H1 (cell line): ENCODE measurements at regions of chr2 and their contacts with region 1.

Region 1: GRCh38 chr2:74690571-74690970 is 36.5 kb downstream of the SEMA4F start:
- DNase-seq: no peak
- H3K4me3 ChIP-seq: no peak overlapping the region
- H3K27ac ChIP-seq: no peak overlapping the region
- H3K4me1 ChIP-seq: no peaks in the 10 kb centered on the region
- H3K27me3 ChIP-seq: no peaks in the 10 kb centered on the region
- CTCF ChIP-seq: peak in 2 of 3 experiments; percentile 76 to 82; a peak in 3 of 4 replicates
- EP300 ChIP-seq: no peak
- POLR2A ChIP-seq: no peak
- RAD21 ChIP-seq: peak; percentile 97 to 98

Region 2: DNA sequence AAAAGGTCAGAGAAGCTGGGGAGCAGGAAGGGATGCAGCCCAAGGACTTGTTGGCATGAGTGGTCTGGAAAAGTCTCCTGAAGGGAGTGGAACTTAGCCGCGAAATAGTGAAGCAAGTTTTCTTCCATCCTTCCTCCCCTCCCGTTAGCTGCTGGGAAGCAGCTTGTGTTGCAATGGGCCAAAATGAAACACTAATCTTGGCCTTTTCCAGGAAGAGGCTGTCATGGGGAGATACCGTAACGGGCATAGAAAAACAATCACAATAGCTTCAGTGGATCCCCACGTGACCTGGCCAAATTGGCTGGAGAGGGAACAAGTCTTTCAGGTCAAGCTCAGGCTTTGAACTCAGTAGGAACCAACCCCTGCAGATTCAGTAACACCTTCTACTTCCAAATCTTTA is 12.8 kb after region 1 on chr2:
- CTCF ChIA-PET with region 1: interaction called, 12 read pairs
- POLR2A ChIA-PET with region 1: no interaction called
- DNase-seq: no peak
- H3K4me3 ChIP-seq: no peak overlapping the region
- H3K27ac ChIP-seq: no peak overlapping the region
- H3K4me1 ChIP-seq: no peaks in the 10 kb centered on the region; a peak in 2 of 7 replicates
- H3K27me3 ChIP-seq: no peaks in the 10 kb centered on the region
- CTCF ChIP-seq: no peak
- EP300 ChIP-seq: no peak
- POLR2A ChIP-seq: no peak
- RAD21 ChIP-seq: no peak

Region 3: GRCh38 chr2:74864846-74865722 is 174.5 kb after region 1 on chr2:
- CTCF ChIA-PET with region 1: interaction called, 10 read pairs
- POLR2A ChIA-PET with region 1: no interaction called
- DNase-seq: no peak
- H3K4me3 ChIP-seq: no peak overlapping the region
- H3K27ac ChIP-seq: peak overlapping the region; percentile 52; the same call in 1 of the 2 replicates
- H3K4me1 ChIP-seq: peaks cover 0 to 11% (median 7%) of the 10 kb centered on the region in 4 experiments
- H3K27me3 ChIP-seq: no peaks in the 10 kb centered on the region
- CTCF ChIP-seq: peak in 2 of 3 experiments; percentile 3 to 48; a peak in 1 of 4 replicates
- EP300 ChIP-seq: no peak
- POLR2A ChIP-seq: no peak
- RAD21 ChIP-seq: peak in 1 of 2 experiments; percentile 23; a peak in 3 of 4 replicates